PC-3 (cell line): ENCODE measurements at regions of chr4 and their contacts with region 1.

Region 1: GRCh38 chr4:102263011-102263787 is 82.1 kb downstream of the SLC39A8 start:
- DNase-seq: peak; percentile 80
- ATAC-seq: peak; percentile 91
- H3K4me3 ChIP-seq: no peak overlapping the region
- H3K27ac ChIP-seq: no peak overlapping the region
- H3K4me1 ChIP-seq: peaks cover 7% of the 10 kb centered on the region
- H3K27me3 ChIP-seq: no peaks in the 10 kb centered on the region
- CTCF ChIP-seq: peak; percentile 71

Region 2: GRCh38 chr4:101169044-101170014 is 1093.9 kb before region 1 on chr4:
- CTCF ChIA-PET with region 1: no interaction called
- POLR2A ChIA-PET with region 1: no interaction called
- intact Hi-C with region 1: loop called (anchors 10 kb)
- DNase-seq: peak; percentile 83
- ATAC-seq: peak; percentile 78
- H3K4me3 ChIP-seq: no peak overlapping the region
- H3K27ac ChIP-seq: no peak overlapping the region
- H3K4me1 ChIP-seq: peaks cover 29% of the 10 kb centered on the region
- H3K27me3 ChIP-seq: no peaks in the 10 kb centered on the region
- CTCF ChIP-seq: peak; percentile 79

Region 3: DNA sequence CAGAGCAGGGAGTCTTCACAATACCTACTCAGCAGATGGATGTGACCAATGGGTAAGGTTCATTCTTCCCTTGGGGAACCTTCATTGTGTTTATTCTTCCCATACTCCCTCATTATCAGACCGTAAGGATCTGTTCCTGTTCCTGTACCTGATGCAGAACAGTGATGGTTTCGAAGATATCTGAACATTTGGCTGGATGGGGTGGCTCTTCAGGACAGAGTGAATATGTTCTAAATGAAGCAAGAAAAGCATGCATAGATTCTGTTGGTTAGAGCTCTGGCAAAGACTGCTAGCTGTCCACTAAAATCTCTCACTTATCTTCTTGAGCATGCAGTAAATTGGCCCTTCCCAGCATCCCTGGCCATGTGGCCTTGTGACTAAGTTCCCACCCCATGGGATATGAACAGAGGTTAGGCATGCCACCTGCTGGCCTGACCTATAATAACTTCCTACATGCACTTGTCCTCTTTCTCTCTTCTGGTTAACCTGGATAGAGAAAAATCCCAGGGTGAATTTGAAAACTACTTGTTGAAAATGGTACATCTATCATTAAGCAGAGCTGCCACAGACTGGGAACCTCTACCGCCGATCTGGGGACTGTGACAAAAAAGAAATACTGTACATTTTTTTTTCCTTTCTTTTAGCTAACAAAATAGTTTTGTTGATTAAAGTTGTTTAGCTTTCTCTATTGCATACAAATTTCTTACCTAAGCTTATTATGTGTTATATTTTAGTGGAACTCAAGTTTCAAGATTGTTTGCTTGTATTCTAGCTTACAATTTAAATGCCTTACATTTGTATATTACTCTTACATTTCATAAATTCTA is 532.7 kb before region 1 on chr4:
- CTCF ChIA-PET with region 1: no interaction called
- POLR2A ChIA-PET with region 1: no interaction called
- intact Hi-C with region 1: loop called (anchors 5 kb)
- DNase-seq: peak; percentile 78
- ATAC-seq: peak; percentile 50
- H3K4me3 ChIP-seq: no peak overlapping the region
- H3K27ac ChIP-seq: no peak overlapping the region
- H3K4me1 ChIP-seq: no peaks in the 10 kb centered on the region
- H3K27me3 ChIP-seq: no peaks in the 10 kb centered on the region
- CTCF ChIP-seq: peak; percentile 81

Region 4: DNA sequence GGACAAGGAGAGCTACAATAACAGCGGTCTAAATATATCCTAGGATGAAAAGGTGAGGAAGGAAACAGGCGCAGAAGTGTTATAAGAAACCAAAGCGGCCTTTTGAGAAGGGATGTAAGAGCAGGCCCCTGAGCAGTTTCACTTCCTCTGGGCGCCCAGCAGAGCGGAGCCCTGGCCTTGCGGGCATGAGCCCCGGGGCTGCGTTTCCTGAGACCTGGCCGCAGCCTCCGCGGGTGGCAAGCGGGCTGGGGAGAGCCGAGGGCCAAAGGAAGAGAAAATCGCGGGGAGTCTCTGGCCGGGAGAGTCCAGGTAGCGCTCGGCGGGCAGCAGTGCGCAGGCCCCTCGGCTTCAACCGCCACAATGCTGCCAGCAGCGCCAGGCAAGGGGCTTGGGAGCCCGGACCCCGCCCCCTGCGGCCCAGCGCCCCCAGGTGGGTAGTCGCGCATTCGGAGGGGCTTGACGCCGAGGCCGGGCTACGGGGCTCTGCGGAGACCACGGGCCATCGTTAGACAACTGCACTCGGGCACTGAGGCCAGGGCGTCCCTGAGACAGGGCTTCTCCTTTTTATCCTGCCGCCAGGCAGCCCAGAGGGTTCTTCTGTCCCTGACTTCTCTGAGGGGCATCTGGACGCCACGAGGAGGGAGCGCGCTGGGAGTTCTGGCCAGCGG is 472.5 kb before region 1 on chr4 and contains the start of gene BANK1:
- CTCF ChIA-PET with region 1: no interaction called
- POLR2A ChIA-PET with region 1: no interaction called
- intact Hi-C with region 1: loop called (anchors 10 kb)
- DNase-seq: peak; percentile 47
- ATAC-seq: peak; percentile 72
- H3K4me3 ChIP-seq: peak within 1 kb of the TSS; percentile 74
- H3K27ac ChIP-seq: peak within 1 kb of the TSS; percentile 56
- H3K4me1 ChIP-seq: peaks cover 16% of the 10 kb centered on the region
- H3K27me3 ChIP-seq: no peaks in the 10 kb centered on the region
- CTCF ChIP-seq: peak; percentile 45; the same call in 1 of the 2 replicates
- total RNA-seq, gene BANK1: 1.5 and 1.8 TPM in 2 replicates

Region 5: DNA sequence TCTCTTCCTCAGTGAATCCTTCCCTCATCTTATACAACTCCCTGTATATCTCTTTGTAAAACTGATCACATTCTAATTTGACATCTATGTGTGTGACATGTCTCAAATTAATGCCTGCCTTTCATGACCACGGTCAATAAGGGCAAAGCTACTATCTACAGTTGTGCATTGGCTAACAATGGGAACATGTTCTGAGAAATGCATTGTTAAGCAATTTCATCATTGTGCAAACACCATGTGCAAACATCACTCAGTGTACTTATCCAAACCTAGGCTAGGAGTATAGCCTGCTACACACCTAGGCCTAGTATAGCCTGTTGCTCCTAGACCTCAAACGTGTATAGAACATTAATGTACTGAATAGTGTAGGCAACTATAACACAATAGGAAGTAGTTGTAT is 377.6 kb before region 1 on chr4:
- CTCF ChIA-PET with region 1: no interaction called
- POLR2A ChIA-PET with region 1: no interaction called
- intact Hi-C with region 1: loop called (anchors 10 kb)
- DNase-seq: peak; percentile 81
- ATAC-seq: peak; percentile 100
- H3K4me3 ChIP-seq: no peak overlapping the region
- H3K27ac ChIP-seq: peak overlapping the region; percentile 40
- H3K4me1 ChIP-seq: peaks cover 12% of the 10 kb centered on the region
- H3K27me3 ChIP-seq: no peaks in the 10 kb centered on the region
- CTCF ChIP-seq: no peak

Region 6: GRCh38 chr4:101977076-101977475 is 286.1 kb before region 1 on chr4:
- CTCF ChIA-PET with region 1: no interaction called
- POLR2A ChIA-PET with region 1: no interaction called
- intact Hi-C with region 1: loop called (anchors 5 kb)
- DNase-seq: peak; percentile 93
- ATAC-seq: peak; percentile 90
- H3K4me3 ChIP-seq: no peak overlapping the region
- H3K27ac ChIP-seq: peak overlapping the region; percentile 72
- H3K4me1 ChIP-seq: peaks cover 73% of the 10 kb centered on the region
- H3K27me3 ChIP-seq: no peaks in the 10 kb centered on the region
- CTCF ChIP-seq: no peak